ENCODE measurements at regions of chr1 and their contacts with region 1.

Region 1: DNA sequence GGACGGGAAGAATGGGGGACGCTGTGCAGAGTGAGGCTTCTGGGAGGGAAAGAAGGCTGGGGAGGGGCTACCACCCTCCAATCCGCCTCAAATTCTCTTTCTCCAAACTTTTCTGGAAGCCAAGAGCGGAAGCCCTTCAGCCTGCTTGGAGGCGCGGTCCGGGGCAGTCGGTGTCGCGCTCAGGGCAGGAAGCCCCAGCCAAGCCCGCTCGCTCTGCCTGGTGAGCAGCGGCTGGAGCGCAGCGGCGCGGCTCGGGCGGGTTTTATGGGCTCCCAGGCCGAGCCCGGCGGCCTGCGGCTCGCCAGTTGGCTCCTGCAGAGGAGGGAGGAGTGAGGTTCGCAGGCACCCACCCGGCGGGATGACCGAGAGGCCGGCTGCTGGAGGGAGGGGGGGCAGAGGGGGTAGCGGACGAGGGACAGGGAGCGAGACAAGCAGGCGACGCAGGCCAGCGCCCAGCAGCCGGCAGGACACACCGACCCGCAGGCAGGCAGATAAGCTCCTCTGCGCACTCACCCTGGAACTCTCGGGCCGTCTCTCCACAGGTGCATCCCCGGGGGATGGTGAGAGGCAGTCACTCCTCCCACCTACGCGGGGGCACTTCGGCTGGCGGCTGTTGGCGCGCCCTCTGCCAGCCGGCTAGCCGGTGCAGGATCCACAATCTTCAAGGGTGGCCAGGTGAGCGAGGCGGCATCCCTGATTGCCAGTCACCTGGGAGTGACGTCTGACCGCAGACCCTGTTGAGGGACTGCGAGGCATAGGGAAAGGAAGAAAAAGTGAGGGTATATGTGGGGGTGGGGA is at the start of gene AVPR1B:
- DNase-seq: peak; percentile 35 to 78 (median 45)
- ATAC-seq: peak; percentile 41 to 85 (median 82)
- H3K4me3 ChIP-seq: peak within 1 kb of the TSS; percentile 17 to 60 (median 50)
- H3K27ac ChIP-seq: peak within 1 kb of the TSS in 3 of 12 donors; percentile 13 to 56 (median 33)
- H3K4me1 ChIP-seq: peaks cover 0 to 15% (median 7%) of the 10 kb centered on the region in 12 donors
- H3K27me3 ChIP-seq: peaks cover 0 to 19% (median 0%) of the 10 kb centered on the region in 9 donors
- CTCF ChIP-seq: peak in 2 of 12 donors; percentile 12 to 31
- POLR2A ChIP-seq: no peak
- total RNA-seq, gene AVPR1B: not detected

Region 2: GRCh38 chr1:205994346-205994745 is 123.0 kb before region 1 on chr1:
- intact Hi-C with region 1: loop called in 1 of 10 experiments (anchors 5 kb)
- DNase-seq: peak in 1 of 5 donors; percentile 20
- ATAC-seq: no peak
- H3K4me3 ChIP-seq: no peak overlapping the region
- H3K27ac ChIP-seq: no peak overlapping the region
- H3K4me1 ChIP-seq: peaks cover 0 to 14% (median 2%) of the 10 kb centered on the region in 12 donors
- H3K27me3 ChIP-seq: no peaks in the 10 kb centered on the region
- CTCF ChIP-seq: no peak
- POLR2A ChIP-seq: no peak

Measured in heart left ventricle (tissue), 16 donors.